ENCODE measurements at regions of chr1 and their contacts with region 1.

Region 1: DNA sequence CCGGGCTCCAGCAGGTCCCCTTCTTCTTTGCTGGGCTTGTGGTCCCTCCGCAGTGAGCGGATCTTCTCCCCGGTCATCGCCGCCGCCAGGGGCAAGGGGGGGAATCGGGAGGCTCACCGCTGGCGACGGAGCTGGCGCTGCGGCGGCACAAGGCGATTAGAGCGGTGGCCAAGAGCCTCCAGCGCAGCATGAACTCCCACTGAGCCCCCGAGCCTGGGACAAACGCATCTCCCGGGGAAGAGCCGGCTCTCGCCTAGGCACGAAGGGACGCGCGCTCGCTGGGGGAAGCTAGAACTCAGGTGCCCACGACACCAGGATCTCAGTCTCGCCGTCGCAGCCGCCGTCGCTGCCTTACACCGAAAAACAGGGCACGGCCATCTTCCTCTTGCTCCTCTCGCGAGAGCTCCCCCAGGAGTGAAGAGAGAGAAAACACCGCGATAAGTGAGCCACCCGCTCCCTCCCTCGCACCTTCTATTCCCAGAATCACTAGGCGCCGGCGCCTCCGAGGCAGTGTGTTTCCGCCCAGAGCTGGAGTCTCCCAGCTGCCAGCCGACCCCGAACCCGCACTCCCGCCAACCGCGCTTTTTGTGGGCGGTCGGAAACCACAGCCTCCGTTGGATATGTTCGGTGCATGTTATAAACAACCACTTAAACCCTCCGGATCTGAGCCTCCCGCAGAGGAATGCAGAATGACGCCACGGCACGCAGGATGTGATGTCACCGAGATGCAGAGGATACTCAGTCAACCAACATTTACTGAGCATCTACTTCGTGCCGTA is at the start of gene ANKRD13C:
- DNase-seq: peak; percentile 77 to 97 (median 88)
- ATAC-seq: peak; percentile 89
- H3K4me3 ChIP-seq: peak within 1 kb of the TSS; percentile 79
- H3K4me3 Mint-ChIP-seq: peak within 1 kb of the TSS; percentile 93
- H3K27ac ChIP-seq: peak within 1 kb of the TSS; percentile 90 to 92
- H3K27ac Mint-ChIP-seq: peak within 1 kb of the TSS; percentile 98
- H3K4me1 ChIP-seq: peaks cover 35% of the 10 kb centered on the region
- H3K4me1 Mint-ChIP-seq: peaks cover 51% of the 10 kb centered on the region
- H3K27me3 ChIP-seq: no peaks in the 10 kb centered on the region
- H3K27me3 Mint-ChIP-seq: no peaks in the 10 kb centered on the region
- CTCF ChIP-seq: no peak
- total RNA-seq, gene ANKRD13C: 40.0 to 40.9 TPM

Region 2: DNA sequence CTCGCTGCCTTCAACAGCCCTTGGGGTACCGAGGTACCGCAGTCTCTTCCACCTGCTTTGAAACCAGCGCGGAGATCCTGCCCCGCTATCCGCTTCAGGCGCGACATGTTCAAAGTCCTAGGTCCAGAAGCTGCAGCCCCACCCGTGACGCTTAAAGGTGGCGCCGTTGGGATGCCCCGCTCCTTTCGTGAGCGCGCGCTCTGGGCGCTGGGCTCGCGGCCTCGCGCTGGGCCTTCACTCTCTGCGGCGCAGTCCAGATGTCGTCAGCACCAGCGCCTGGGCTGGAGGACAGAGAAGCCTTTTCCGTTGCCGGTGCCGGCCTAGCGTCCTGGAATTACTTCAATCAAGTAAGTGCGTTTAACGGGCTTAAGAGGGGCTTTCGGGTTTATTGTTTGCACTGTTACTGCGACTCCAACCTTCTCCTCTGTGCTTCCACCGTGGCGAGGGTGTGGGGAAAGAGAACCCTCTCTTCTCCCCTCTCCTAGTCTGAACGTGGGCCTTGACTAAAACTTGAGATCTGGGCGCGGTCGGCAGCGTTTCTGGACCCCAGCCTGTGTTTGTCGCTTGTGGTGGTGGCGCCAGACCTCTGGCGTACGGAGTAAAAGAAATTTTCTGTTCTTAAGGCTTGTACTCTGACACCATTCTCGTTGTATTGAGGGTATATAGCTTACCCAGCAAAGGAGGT is 148.9 kb before region 1 on chr1 and contains the start of gene LRRC40:
- CTCF ChIA-PET with region 1: no interaction called
- POLR2A ChIA-PET with region 1: interaction called, 7 read pairs
- intact Hi-C with region 1: loop called in 1 of 2 experiments (anchors 1 kb)
- DNase-seq: peak; percentile 91 to 98 (median 96)
- ATAC-seq: peak; percentile 95
- H3K4me3 ChIP-seq: peak within 1 kb of the TSS; percentile 75 to 83
- H3K4me3 Mint-ChIP-seq: peak within 1 kb of the TSS; percentile 92
- H3K27ac ChIP-seq: peak within 1 kb of the TSS; percentile 88 to 97
- H3K27ac Mint-ChIP-seq: peak within 1 kb of the TSS; percentile 99
- H3K4me1 ChIP-seq: peaks cover 48% of the 10 kb centered on the region
- H3K4me1 Mint-ChIP-seq: peaks cover 76% of the 10 kb centered on the region
- H3K27me3 ChIP-seq: no peaks in the 10 kb centered on the region
- H3K27me3 Mint-ChIP-seq: no peaks in the 10 kb centered on the region
- CTCF ChIP-seq: no peak
- total RNA-seq, gene LRRC40: 13.7 to 15.4 TPM

Region 3: GRCh38 chr1:70221241-70222121 is 133.0 kb before region 1 on chr1 and contains the start of gene SRSF11:
- CTCF ChIA-PET with region 1: no interaction called
- POLR2A ChIA-PET with region 1: interaction called, 21 read pairs
- intact Hi-C with region 1: loop called (anchors 1 to 2 kb)
- DNase-seq: peak; percentile 95 to 98 (median 98)
- ATAC-seq: peak; percentile 94
- H3K4me3 ChIP-seq: peak within 1 kb of the TSS; percentile 82 to 91
- H3K4me3 Mint-ChIP-seq: peak within 1 kb of the TSS; percentile 94
- H3K27ac ChIP-seq: peak within 1 kb of the TSS; percentile 96 to 97
- H3K27ac Mint-ChIP-seq: peak within 1 kb of the TSS; percentile 99
- H3K4me1 ChIP-seq: peaks cover 43% of the 10 kb centered on the region
- H3K4me1 Mint-ChIP-seq: peaks cover 48% of the 10 kb centered on the region
- H3K27me3 ChIP-seq: no peaks in the 10 kb centered on the region
- H3K27me3 Mint-ChIP-seq: no peaks in the 10 kb centered on the region
- CTCF ChIP-seq: no peak
- total RNA-seq, gene SRSF11: 427 to 456 TPM

Region 4: GRCh38 chr1:70319750-70320149 is 34.8 kb before region 1 on chr1:
- CTCF ChIA-PET with region 1: no interaction called
- POLR2A ChIA-PET with region 1: interaction called, 5 read pairs
- intact Hi-C with region 1: loop called in 1 of 2 experiments (anchors 5 kb)
- DNase-seq: no peak
- ATAC-seq: no peak
- H3K4me3 ChIP-seq: no peak overlapping the region
- H3K4me3 Mint-ChIP-seq: no peak overlapping the region
- H3K27ac ChIP-seq: no peak overlapping the region
- H3K27ac Mint-ChIP-seq: no peak overlapping the region
- H3K4me1 ChIP-seq: peaks cover 3% of the 10 kb centered on the region
- H3K4me1 Mint-ChIP-seq: peaks cover 28% of the 10 kb centered on the region
- H3K27me3 ChIP-seq: no peaks in the 10 kb centered on the region
- H3K27me3 Mint-ChIP-seq: no peaks in the 10 kb centered on the region
- CTCF ChIP-seq: no peak

Region 5: GRCh38 chr1:70410604-70411359 is 56.3 kb after region 1 on chr1 and contains the start of gene CTH:
- CTCF ChIA-PET with region 1: interaction called, 11 read pairs
- POLR2A ChIA-PET with region 1: interaction called, 111 read pairs
- intact Hi-C with region 1: loop called (anchors 1 kb)
- DNase-seq: peak; percentile 82 to 97 (median 91)
- ATAC-seq: peak; percentile 90
- H3K4me3 ChIP-seq: peak within 1 kb of the TSS; percentile 69 to 70
- H3K4me3 Mint-ChIP-seq: peak within 1 kb of the TSS; percentile 92
- H3K27ac ChIP-seq: peak within 1 kb of the TSS; percentile 87 to 88
- H3K27ac Mint-ChIP-seq: peak within 1 kb of the TSS; percentile 95
- H3K4me1 ChIP-seq: peaks cover 14% of the 10 kb centered on the region
- H3K4me1 Mint-ChIP-seq: peaks cover 30% of the 10 kb centered on the region
- H3K27me3 ChIP-seq: no peaks in the 10 kb centered on the region
- H3K27me3 Mint-ChIP-seq: peaks cover 5% of the 10 kb centered on the region
- CTCF ChIP-seq: no peak
- total RNA-seq, gene CTH: 15.5 to 19.1 TPM

Measured in CD8-positive, alpha-beta T cell (primary cell).